Heart right ventricle (tissue), 16 donors: ENCODE measurements at regions of chr1 and their contacts with region 1.

Region 1: GRCh38 chr1:226519716-226520598 is 28.6 kb upstream of the STUM start:
- DNase-seq: peak in 1 of 2 donors; percentile 28
- ATAC-seq: peak in 5 of 8 donors; percentile 24 to 66 (median 41)
- H3K4me3 ChIP-seq: no peak overlapping the region
- H3K27ac ChIP-seq: no peak overlapping the region
- H3K4me1 ChIP-seq: peaks cover 0 to 17% (median 0%) of the 10 kb centered on the region in 9 donors
- H3K27me3 ChIP-seq: peaks cover 0 to 12% (median 0%) of the 10 kb centered on the region in 7 donors
- CTCF ChIP-seq: peak in 2 of 9 donors; percentile 26 to 27

Region 2: GRCh38 chr1:226438007-226438406 is 82.0 kb before region 1 on chr1:
- intact Hi-C with region 1: loop called in 1 of 10 experiments (anchors 5 kb)
- DNase-seq: no peak
- ATAC-seq: no peak
- H3K4me3 ChIP-seq: no peak overlapping the region
- H3K27ac ChIP-seq: no peak overlapping the region
- H3K4me1 ChIP-seq: peaks cover 0 to 4% (median 0%) of the 10 kb centered on the region in 9 donors
- H3K27me3 ChIP-seq: peaks cover 0 to 11% (median 2%) of the 10 kb centered on the region in 7 donors
- CTCF ChIP-seq: peak in 4 of 9 donors; percentile 5 to 25 (median 12)

Region 3: GRCh38 chr1:226474443-226475141 is 45.4 kb before region 1 on chr1:
- intact Hi-C with region 1: loop called in 1 of 10 experiments (anchors 5 kb)
- DNase-seq: no peak
- ATAC-seq: peak in 4 of 8 donors; percentile 11 to 38 (median 26)
- H3K4me3 ChIP-seq: no peak overlapping the region
- H3K27ac ChIP-seq: no peak overlapping the region
- H3K4me1 ChIP-seq: peaks cover 0 to 11% (median 0%) of the 10 kb centered on the region in 9 donors
- H3K27me3 ChIP-seq: peaks cover 0 to 4% (median 0%) of the 10 kb centered on the region in 7 donors
- CTCF ChIP-seq: no peak

Region 4: GRCh38 chr1:226558036-226558650 is 38.2 kb after region 1 on chr1:
- intact Hi-C with region 1: no loop called
- DNase-seq: no peak
- ATAC-seq: peak in 1 of 8 donors; percentile 42
- H3K4me3 ChIP-seq: no peak overlapping the region
- H3K27ac ChIP-seq: no peak overlapping the region
- H3K4me1 ChIP-seq: peaks cover 0 to 5% (median 0%) of the 10 kb centered on the region in 9 donors
- H3K27me3 ChIP-seq: peaks cover 0 to 5% (median 0%) of the 10 kb centered on the region in 7 donors
- CTCF ChIP-seq: no peak